ENCODE measurements at regions of chrX and their contacts with region 1.

Region 1: DNA sequence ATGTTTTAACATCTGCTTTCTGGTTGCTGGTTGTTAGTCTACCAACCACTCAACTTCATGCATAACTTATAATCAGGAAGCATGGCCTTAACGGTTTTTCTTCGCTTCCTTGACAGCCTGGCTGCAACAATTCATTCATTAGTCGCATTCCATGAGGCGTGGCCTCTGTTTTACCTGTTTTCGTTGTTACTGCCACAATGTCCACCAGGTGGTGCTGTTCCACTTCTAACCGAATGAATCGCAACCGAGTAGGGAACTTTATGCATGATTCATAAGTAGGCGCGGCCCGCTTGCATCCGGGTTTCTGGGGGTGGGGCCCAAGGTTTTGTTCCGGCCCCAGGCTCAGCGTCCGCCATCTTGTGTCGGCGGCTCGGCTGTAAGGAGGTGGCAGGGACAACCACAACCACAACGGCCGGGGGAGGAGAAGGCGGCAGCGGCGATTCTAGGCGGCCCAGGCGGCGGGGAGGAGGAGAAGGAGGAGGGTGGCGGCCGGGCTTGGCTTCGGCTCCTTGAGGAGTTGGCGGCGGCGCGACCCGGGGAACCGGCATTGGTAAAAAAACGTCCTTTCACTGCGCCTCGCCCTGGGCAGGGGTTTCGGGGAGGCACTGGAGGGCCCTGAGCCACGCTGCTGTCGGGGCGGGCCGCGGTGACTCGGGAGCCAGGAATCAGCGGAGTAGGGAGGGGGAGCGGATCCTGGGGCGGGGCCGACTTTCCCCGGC is at the start of gene UBA1:
- DNase-seq: peak; percentile 69 to 97 (median 95)
- ATAC-seq: peak; percentile 89
- H3K4me3 ChIP-seq: peak within 1 kb of the TSS; percentile 82
- H3K4me3 Mint-ChIP-seq: peak within 1 kb of the TSS; percentile 94 to 100 (median 98)
- H3K27ac ChIP-seq: peak within 1 kb of the TSS; percentile 94
- H3K27ac Mint-ChIP-seq: peak within 1 kb of the TSS; percentile 95 to 100 (median 98)
- H3K4me1 ChIP-seq: peaks cover 16 to 25% of the 10 kb centered on the region in 2 donors
- H3K4me1 Mint-ChIP-seq: peaks cover 19 to 77% (median 53%) of the 10 kb centered on the region in 7 donors
- H3K27me3 ChIP-seq: no peaks in the 10 kb centered on the region
- H3K27me3 Mint-ChIP-seq: no peaks in the 10 kb centered on the region
- total RNA-seq, gene UBA1: 98.0 to 183 (median 118) TPM

Region 2: GRCh38 chrX:47129157-47129898 is 64.3 kb before region 1 on chrX:
- CTCF ChIA-PET with region 1: no interaction called
- POLR2A ChIA-PET with region 1: no interaction called
- intact Hi-C with region 1: loop called (anchors 1 to 5 kb)
- DNase-seq: peak; percentile 74 to 94 (median 90)
- ATAC-seq: peak; percentile 99
- H3K4me3 ChIP-seq: peak overlapping the region; percentile 95
- H3K4me3 Mint-ChIP-seq: peak overlapping the region; percentile 76 to 100 (median 97)
- H3K27ac ChIP-seq: peak overlapping the region; percentile 72
- H3K27ac Mint-ChIP-seq: peak overlapping the region; percentile 93 to 99 (median 97)
- H3K4me1 ChIP-seq: no peaks in the 10 kb centered on the region
- H3K4me1 Mint-ChIP-seq: peaks cover 0 to 7% (median 4%) of the 10 kb centered on the region in 7 donors
- H3K27me3 ChIP-seq: no peaks in the 10 kb centered on the region
- H3K27me3 Mint-ChIP-seq: no peaks in the 10 kb centered on the region

Region 3: DNA sequence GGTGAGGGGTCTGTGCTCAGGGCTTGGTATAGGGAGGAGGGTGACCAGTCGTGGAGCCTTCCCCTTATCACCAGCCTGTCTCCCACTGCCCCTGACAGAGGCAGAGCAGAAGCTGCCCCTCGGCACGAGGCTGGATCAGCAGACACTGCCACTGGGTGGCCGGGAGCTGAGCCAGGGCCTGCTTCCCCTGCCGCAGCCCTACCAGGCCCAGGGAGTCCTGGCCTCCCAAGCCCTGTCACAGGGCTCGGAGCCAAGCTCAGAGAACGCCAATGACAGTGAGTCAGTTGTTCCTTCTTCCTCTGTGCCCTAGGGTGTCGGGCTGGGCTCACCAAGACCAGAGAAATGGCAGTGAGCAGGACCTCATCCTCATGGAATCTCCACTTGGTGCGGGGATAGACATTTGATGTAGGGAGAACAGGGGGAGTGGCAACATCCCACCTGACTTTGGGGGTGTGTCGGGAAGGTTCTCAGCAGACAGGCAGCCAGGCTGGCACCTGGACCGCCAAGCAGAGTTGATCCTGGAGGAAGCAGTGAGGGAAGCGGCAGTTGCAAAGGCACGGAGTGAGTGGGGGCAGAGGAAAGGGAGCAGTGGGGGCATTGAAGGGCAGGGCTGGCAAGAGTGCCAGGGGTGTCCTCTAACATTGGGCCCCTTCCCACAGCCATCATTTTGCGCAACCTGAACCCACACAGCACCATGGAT is 14.3 kb before region 1 on chrX:
- CTCF ChIA-PET with region 1: no interaction called
- POLR2A ChIA-PET with region 1: no interaction called
- intact Hi-C with region 1: no loop called
- DNase-seq: no peak
- ATAC-seq: no peak
- H3K4me3 ChIP-seq: no peak overlapping the region
- H3K4me3 Mint-ChIP-seq: no peak overlapping the region
- H3K27ac ChIP-seq: no peak overlapping the region
- H3K27ac Mint-ChIP-seq: no peak overlapping the region
- H3K4me1 ChIP-seq: no peaks in the 10 kb centered on the region
- H3K4me1 Mint-ChIP-seq: peaks cover 0 to 3% (median 0%) of the 10 kb centered on the region in 7 donors
- H3K27me3 ChIP-seq: no peaks in the 10 kb centered on the region
- H3K27me3 Mint-ChIP-seq: no peaks in the 10 kb centered on the region

Region 4: GRCh38 chrX:47233337-47234113 is 39.9 kb after region 1 on chrX:
- CTCF ChIA-PET with region 1: no interaction called
- POLR2A ChIA-PET with region 1: interaction called, 14 read pairs
- intact Hi-C with region 1: loop called (anchors 1 kb)
- DNase-seq: peak; percentile 71 to 97 (median 94)
- ATAC-seq: peak; percentile 92
- H3K4me3 ChIP-seq: peak overlapping the region; percentile 74
- H3K4me3 Mint-ChIP-seq: peak overlapping the region; percentile 84 to 98 (median 90)
- H3K27ac ChIP-seq: peak overlapping the region; percentile 99
- H3K27ac Mint-ChIP-seq: peak overlapping the region; percentile 94 to 100 (median 98)
- H3K4me1 ChIP-seq: peaks cover 0 to 14% of the 10 kb centered on the region in 2 donors
- H3K4me1 Mint-ChIP-seq: peaks cover 8 to 49% (median 24%) of the 10 kb centered on the region in 7 donors
- H3K27me3 ChIP-seq: no peaks in the 10 kb centered on the region
- H3K27me3 Mint-ChIP-seq: peaks cover 0 to 4% (median 0%) of the 10 kb centered on the region in 5 donors

Region 5: GRCh38 chrX:47245156-47245555 is 51.5 kb after region 1 on chrX:
- CTCF ChIA-PET with region 1: no interaction called
- POLR2A ChIA-PET with region 1: no interaction called
- intact Hi-C with region 1: no loop called
- DNase-seq: no peak
- ATAC-seq: no peak
- H3K4me3 ChIP-seq: no peak overlapping the region
- H3K4me3 Mint-ChIP-seq: no peak overlapping the region
- H3K27ac ChIP-seq: no peak overlapping the region
- H3K27ac Mint-ChIP-seq: no peak overlapping the region
- H3K4me1 ChIP-seq: no peaks in the 10 kb centered on the region
- H3K4me1 Mint-ChIP-seq: peaks cover 0 to 8% (median 0%) of the 10 kb centered on the region in 7 donors
- H3K27me3 ChIP-seq: no peaks in the 10 kb centered on the region
- H3K27me3 Mint-ChIP-seq: no peaks in the 10 kb centered on the region

Region 6: DNA sequence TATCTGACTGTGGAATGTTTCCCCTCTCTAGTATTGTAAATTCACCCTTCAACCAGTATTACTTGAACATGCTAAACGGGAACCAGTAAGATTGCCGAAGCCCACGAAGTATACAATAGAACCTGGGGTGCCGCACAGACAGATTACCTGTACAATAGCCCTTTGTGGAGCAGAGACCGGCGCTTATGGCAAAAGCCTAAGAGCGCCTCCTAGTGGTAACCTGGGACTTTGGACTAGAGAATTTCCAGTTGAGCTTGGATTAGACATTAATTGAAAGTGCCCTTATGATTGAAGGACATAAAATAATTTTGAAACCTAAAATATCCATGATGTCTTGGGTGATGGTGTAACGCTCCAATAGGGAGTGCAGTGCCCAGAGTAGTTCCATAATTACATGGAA is 190.9 kb after region 1 on chrX:
- CTCF ChIA-PET with region 1: interaction called, 11 read pairs
- POLR2A ChIA-PET with region 1: interaction called, 16 read pairs
- intact Hi-C with region 1: loop called (anchors 1 kb)
- DNase-seq: peak; percentile 27 to 83 (median 67)
- ATAC-seq: peak; percentile 86
- H3K4me3 ChIP-seq: no peak overlapping the region
- H3K4me3 Mint-ChIP-seq: peak overlapping the region in 3 of 10 donors; percentile 31 to 39 (median 37)
- H3K27ac ChIP-seq: no peak overlapping the region
- H3K27ac Mint-ChIP-seq: peak overlapping the region in 3 of 9 donors; percentile 45 to 73 (median 67)
- H3K4me1 ChIP-seq: peaks cover 4 to 10% of the 10 kb centered on the region in 2 donors
- H3K4me1 Mint-ChIP-seq: peaks cover 11 to 39% (median 31%) of the 10 kb centered on the region in 7 donors
- H3K27me3 ChIP-seq: no peaks in the 10 kb centered on the region
- H3K27me3 Mint-ChIP-seq: no peaks in the 10 kb centered on the region

Region 7: DNA sequence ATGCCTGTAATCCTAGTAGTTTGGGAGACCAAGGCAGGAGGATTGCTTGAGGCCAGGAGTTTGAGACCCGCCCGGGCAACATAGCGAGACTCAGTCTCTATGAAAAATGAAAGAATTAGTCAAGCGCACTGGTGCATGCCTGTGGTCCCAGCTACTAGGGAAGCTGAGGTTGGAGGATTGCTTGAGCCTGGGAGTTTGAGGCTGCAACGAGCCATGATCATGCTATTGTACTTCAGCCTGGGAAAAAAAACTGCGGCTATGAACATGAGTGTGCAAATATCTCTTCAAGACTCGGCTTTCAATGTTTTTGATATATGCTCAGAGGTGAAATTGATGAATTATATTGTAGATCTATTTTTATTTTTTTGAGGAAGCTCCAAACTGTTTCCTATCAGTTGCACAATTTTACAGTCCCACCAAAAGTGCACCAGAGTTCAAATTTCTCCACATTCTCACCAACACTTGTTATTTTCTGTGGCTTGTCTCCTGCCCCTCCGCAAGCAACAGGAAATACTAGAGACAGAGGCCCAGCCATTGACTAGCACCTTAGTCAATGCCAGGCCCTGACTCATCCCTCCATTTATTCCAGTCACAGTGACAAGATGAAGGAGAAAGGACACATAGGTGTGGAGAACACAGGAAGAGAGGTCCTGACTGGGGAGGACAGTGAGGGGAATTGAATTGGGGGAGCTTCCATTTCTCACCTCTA is 322.5 kb after region 1 on chrX:
- CTCF ChIA-PET with region 1: no interaction called
- POLR2A ChIA-PET with region 1: no interaction called
- intact Hi-C with region 1: no loop called
- DNase-seq: no peak
- ATAC-seq: no peak
- H3K4me3 ChIP-seq: no peak overlapping the region
- H3K4me3 Mint-ChIP-seq: no peak overlapping the region
- H3K27ac ChIP-seq: no peak overlapping the region
- H3K27ac Mint-ChIP-seq: peak overlapping the region in 1 of 9 donors; percentile 48
- H3K4me1 ChIP-seq: peaks cover 0 to 4% of the 10 kb centered on the region in 2 donors
- H3K4me1 Mint-ChIP-seq: peaks cover 5 to 22% (median 11%) of the 10 kb centered on the region in 7 donors
- H3K27me3 ChIP-seq: no peaks in the 10 kb centered on the region
- H3K27me3 Mint-ChIP-seq: peaks cover 0 to 12% (median 0%) of the 10 kb centered on the region in 5 donors

Region 8: GRCh38 chrX:47560831-47561652 is 367.4 kb after region 1 on chrX and contains the start of gene ARAF:
- CTCF ChIA-PET with region 1: interaction called, 3 read pairs
- POLR2A ChIA-PET with region 1: no interaction called
- intact Hi-C with region 1: loop called in 1 of 2 experiments (anchors 1 kb)
- DNase-seq: peak; percentile 78 to 98 (median 96)
- ATAC-seq: peak; percentile 92
- H3K4me3 ChIP-seq: peak within 1 kb of the TSS; percentile 92
- H3K4me3 Mint-ChIP-seq: peak within 1 kb of the TSS; percentile 85 to 98 (median 92)
- H3K27ac ChIP-seq: peak within 1 kb of the TSS; percentile 92
- H3K27ac Mint-ChIP-seq: peak within 1 kb of the TSS; percentile 96 to 100 (median 97)
- H3K4me1 ChIP-seq: peaks cover 10 to 18% of the 10 kb centered on the region in 2 donors
- H3K4me1 Mint-ChIP-seq: peaks cover 12 to 58% (median 43%) of the 10 kb centered on the region in 7 donors
- H3K27me3 ChIP-seq: no peaks in the 10 kb centered on the region
- H3K27me3 Mint-ChIP-seq: no peaks in the 10 kb centered on the region
- total RNA-seq, gene ARAF: 87.3 to 130 (median 118) TPM

Region 9: GRCh38 chrX:47658684-47659515 is 465.3 kb after region 1 on chrX and contains the start of gene UXT:
- CTCF ChIA-PET with region 1: no interaction called
- POLR2A ChIA-PET with region 1: no interaction called
- intact Hi-C with region 1: loop called in 1 of 2 experiments (anchors 2 kb)
- DNase-seq: peak; percentile 75 to 92 (median 89)
- ATAC-seq: peak; percentile 91
- H3K4me3 ChIP-seq: peak within 1 kb of the TSS; percentile 86
- H3K4me3 Mint-ChIP-seq: peak within 1 kb of the TSS; percentile 80 to 95 (median 92)
- H3K27ac ChIP-seq: peak within 1 kb of the TSS; percentile 99
- H3K27ac Mint-ChIP-seq: peak within 1 kb of the TSS; percentile 94 to 99 (median 97)
- H3K4me1 ChIP-seq: peaks cover 4 to 8% of the 10 kb centered on the region in 2 donors
- H3K4me1 Mint-ChIP-seq: peaks cover 9 to 34% (median 21%) of the 10 kb centered on the region in 7 donors
- H3K27me3 ChIP-seq: no peaks in the 10 kb centered on the region
- H3K27me3 Mint-ChIP-seq: no peaks in the 10 kb centered on the region
- total RNA-seq, gene UXT: 160 to 235 (median 201) TPM

Region 10: DNA sequence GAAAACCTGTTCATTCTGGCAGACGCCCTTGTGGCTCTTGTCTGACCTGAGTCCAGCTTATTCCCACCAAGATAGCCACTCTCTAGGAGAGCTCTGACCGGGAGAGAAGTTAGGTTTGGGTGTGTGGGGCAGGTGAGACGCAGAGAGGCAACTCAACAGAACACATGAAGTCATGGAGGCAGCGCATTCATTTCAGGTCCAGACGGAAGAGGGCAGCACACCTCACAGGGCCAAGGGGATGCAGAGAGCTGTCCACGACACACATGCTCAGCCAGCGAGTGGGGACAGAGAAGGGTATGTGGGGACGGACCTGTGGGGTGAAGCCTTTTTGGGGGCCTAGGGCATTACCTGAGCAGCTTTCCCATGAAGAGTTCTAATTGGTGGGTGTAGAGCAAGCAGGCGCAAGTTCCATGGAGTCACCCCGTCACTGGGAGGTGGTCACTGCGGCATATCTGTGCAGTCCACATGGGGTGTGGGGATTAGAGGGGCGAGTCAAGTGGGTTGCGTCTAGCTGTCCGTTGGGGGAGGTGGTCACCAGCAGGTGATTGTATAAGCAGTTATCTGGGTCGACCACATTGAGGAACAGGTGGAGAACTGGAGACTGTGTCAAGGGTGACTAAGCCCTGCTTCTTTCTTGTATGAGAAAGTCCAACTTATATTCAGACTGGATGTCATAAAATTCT is 489.7 kb after region 1 on chrX:
- CTCF ChIA-PET with region 1: no interaction called
- POLR2A ChIA-PET with region 1: no interaction called
- intact Hi-C with region 1: no loop called
- DNase-seq: no peak
- ATAC-seq: no peak
- H3K4me3 ChIP-seq: no peak overlapping the region
- H3K4me3 Mint-ChIP-seq: no peak overlapping the region
- H3K27ac ChIP-seq: no peak overlapping the region
- H3K27ac Mint-ChIP-seq: no peak overlapping the region
- H3K4me1 ChIP-seq: no peaks in the 10 kb centered on the region
- H3K4me1 Mint-ChIP-seq: peaks cover 0 to 4% (median 0%) of the 10 kb centered on the region in 7 donors
- H3K27me3 ChIP-seq: no peaks in the 10 kb centered on the region
- H3K27me3 Mint-ChIP-seq: peaks cover 0 to 15% (median 0%) of the 10 kb centered on the region in 5 donors

Region 11: GRCh38 chrX:48021026-48021900 is 827.6 kb after region 1 on chrX:
- CTCF ChIA-PET with region 1: no interaction called
- POLR2A ChIA-PET with region 1: no interaction called
- intact Hi-C with region 1: loop called (anchors 1 to 5 kb)
- DNase-seq: peak; percentile 57 to 90 (median 87)
- ATAC-seq: peak; percentile 77
- H3K4me3 ChIP-seq: peak overlapping the region; percentile 96
- H3K4me3 Mint-ChIP-seq: peak overlapping the region; percentile 91 to 97 (median 94)
- H3K27ac ChIP-seq: peak overlapping the region; percentile 87
- H3K27ac Mint-ChIP-seq: peak overlapping the region; percentile 93 to 99 (median 98)
- H3K4me1 ChIP-seq: no peaks in the 10 kb centered on the region
- H3K4me1 Mint-ChIP-seq: peaks cover 6 to 29% (median 10%) of the 10 kb centered on the region in 7 donors
- H3K27me3 ChIP-seq: no peaks in the 10 kb centered on the region
- H3K27me3 Mint-ChIP-seq: peaks cover 0 to 6% (median 0%) of the 10 kb centered on the region in 5 donors